Activated CD4-positive, alpha-beta T cell treated with anti-CD3 and anti-CD28 coated beads, Interleukin-2, amount 10 ng/mL, durations not matched to agents 24 days and 14 days (primary cell): ENCODE measurements at regions of chr14 and their contacts with region 1.

Region 1: DNA sequence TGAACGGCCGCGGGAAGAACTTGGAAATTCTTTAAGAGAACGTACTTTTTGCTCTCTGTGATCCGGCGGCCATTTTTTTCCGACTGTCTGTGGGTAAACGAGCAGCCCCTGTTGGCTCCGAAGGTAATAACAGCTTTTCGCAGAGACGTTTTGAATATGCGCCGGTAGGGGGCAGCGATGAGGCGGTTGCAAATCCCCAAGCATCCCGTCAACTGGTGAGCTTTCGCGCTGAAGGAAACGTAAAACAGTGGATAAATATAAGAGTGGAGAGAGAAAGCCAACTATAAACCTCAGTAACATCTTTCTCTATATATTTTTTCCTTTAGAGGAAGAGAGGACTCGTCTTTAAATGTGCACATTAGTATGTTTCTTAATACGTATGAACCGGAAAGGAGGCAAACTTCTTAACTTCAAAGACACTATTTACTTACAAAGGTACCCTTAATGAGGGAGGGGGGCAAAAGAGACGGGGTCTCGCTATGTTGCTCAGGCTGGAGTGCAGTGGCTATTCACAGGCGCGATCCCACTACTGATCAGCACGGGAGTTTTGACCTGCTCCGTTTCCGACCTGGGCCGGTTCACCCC is 9.6 kb upstream of the NEMF start:
- DNase-seq: peak; percentile 95
- H3K4me3 Mint-ChIP-seq: no peak overlapping the region
- H3K27ac Mint-ChIP-seq: no peak overlapping the region
- H3K4me1 Mint-ChIP-seq: peaks cover 18% of the 10 kb centered on the region
- H3K27me3 Mint-ChIP-seq: peaks cover 4% of the 10 kb centered on the region

Region 2: DNA sequence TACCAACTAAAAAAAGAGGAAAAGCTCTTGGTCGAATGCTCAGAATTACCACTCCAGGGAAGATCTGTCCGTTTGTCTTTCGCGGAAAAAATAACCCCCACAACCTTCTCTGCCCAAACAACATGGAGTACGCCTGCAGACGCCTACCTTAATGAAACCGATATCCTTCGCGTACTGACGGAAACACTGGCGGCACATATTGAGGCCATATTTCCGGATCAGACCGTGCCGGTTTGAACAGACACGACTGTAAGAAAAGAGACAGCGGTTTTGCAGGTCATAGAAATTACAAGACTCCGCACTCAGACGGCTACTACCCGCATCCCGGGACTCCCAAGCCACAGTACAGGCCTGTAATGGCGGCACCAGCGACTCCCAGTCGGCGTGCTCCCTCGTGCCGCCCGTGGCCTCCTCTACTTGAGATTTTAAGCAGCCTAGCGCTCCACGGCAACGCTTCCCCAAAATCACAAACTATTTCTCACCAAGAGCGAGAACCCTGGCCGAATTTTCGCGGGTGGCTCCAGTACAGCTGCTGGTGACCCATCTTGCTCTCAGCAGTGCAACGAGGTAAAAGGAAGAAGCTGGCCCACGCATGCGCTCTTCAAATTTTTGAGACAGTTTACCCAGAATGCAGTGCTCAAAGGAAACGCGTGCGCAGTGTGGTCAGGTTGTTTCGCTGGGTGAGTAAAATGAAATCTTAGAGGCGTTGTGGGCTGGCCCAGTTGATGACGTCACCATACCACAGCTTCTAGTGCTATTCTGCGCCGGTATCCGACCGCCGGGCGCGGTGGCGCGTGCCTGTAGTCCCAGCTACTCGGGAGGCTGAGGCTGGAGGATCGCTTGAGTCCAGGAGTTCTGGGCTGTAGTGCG is 276.1 kb before region 1 on chr14 and contains the start of gene RPS29:
- intact Hi-C with region 1: no loop called
- DNase-seq: peak; percentile 99
- H3K4me3 Mint-ChIP-seq: peak within 1 kb of the TSS; percentile 89
- H3K27ac Mint-ChIP-seq: peak within 1 kb of the TSS; percentile 99
- H3K4me1 Mint-ChIP-seq: peaks cover 35% of the 10 kb centered on the region
- H3K27me3 Mint-ChIP-seq: peaks cover 3% of the 10 kb centered on the region
- total RNA-seq, gene RPS29: 1,960 and 2,033 TPM in 2 replicates

Region 3: DNA sequence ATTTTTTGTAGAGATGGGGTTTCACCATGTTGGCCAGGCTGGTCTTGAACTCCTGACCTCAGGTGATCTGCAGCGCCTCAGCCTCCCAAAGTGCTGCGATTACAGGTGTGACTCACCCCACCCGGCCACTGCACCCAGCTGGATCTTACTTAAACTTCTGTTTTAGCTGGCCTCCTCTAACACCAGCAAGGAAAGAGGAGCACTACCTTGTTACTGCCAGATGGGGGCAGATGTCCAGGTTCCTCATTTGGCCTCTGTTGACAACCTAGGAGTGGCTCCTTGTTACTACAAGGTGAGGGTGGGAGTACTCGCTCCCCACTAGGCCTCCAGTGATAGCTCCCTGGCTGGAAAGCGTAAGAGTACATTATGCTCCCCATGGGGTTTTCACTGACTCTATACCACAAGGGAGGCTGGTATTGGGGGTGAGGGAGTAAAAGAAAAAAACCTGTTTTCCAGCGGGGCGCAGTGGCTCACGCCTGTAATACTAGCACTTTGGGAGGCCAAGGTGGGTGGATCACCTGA is 17.6 kb after region 1 on chr14:
- intact Hi-C with region 1: no loop called
- DNase-seq: peak; percentile 87
- H3K4me3 Mint-ChIP-seq: no peak overlapping the region
- H3K27ac Mint-ChIP-seq: peak overlapping the region; percentile 66
- H3K4me1 Mint-ChIP-seq: peaks cover 25% of the 10 kb centered on the region
- H3K27me3 Mint-ChIP-seq: no peaks in the 10 kb centered on the region

Region 4: DNA sequence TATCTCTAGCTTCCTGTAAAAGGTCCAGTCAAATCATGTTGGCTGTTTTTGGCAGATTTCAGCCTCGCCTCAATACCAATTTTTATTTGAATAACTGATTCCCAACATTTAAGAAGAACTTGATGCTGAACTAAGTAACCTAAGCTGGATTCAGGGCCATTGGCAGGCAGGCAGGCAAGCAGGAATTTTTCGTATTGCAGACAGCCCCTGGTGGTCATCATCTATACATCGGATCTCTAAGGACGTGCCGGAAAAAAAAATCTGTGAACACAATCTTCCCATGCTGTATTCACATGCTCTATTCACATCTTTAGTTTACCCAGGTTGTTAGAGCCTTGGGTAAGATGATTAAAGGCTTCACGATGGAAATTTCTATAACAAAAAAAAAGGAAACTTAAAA is 247.2 kb after region 1 on chr14:
- intact Hi-C with region 1: loop called (anchors 1 kb)
- DNase-seq: no peak
- H3K4me3 Mint-ChIP-seq: no peak overlapping the region
- H3K27ac Mint-ChIP-seq: no peak overlapping the region
- H3K4me1 Mint-ChIP-seq: peaks cover 20% of the 10 kb centered on the region
- H3K27me3 Mint-ChIP-seq: no peaks in the 10 kb centered on the region

Region 5: GRCh38 chr14:50311975-50312733 is 450.0 kb after region 1 on chr14 and contains the starts of genes DMAC2L and L2HGDH:
- intact Hi-C with region 1: loop called (anchors 2 kb)
- DNase-seq: peak; percentile 98
- H3K4me3 Mint-ChIP-seq: peak within 1 kb of the TSS; percentile 96
- H3K27ac Mint-ChIP-seq: peak within 1 kb of the TSS; percentile 99
- H3K4me1 Mint-ChIP-seq: peaks cover 39% of the 10 kb centered on the region
- H3K27me3 Mint-ChIP-seq: no peaks in the 10 kb centered on the region
- total RNA-seq, gene DMAC2L: 16.3 and 18.8 TPM in 2 replicates
- total RNA-seq, gene L2HGDH: 16.8 and 18.0 TPM in 2 replicates